RWPE1 (cell line): ENCODE measurements at regions of chr19 and their contacts with region 1.

Region 1: DNA sequence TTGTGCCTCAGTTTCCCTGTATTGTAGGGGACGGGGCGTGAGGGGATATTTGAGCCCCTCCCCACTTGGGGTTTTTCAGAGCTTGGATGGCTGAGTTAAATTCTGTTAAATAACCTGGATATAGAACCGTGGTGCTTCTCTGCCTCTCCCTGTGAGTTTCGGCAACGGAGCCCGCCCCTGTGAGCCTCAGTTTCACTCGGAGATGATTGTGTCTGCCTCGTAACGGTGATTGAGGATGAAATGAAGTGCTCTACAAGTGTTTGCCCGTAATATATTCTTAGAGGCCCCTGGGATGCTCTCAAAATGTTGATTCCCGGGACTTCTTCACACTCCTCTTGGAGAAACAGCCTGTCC is 509 bp downstream of the KXD1 start:
- DNase-seq: no peak
- H3K27ac ChIP-seq: peak overlapping the region; percentile 83
- CTCF ChIP-seq: no peak

Region 2: GRCh38 chr19:18571564-18572300 is 13.6 kb after region 1 on chr19 and contains the start of gene UBA52:
- CTCF ChIA-PET with region 1: interaction called, 4 read pairs
- POLR2A ChIA-PET with region 1: interaction called, 12 read pairs
- DNase-seq: peak; percentile 91
- H3K27ac ChIP-seq: peak within 1 kb of the TSS; percentile 94
- CTCF ChIP-seq: no peak